ENCODE measurements at regions of chr10 and their contacts with region 1.

Region 1: GRCh38 chr10:76303682-76304316 is 872.4 kb downstream of the LRMDA start:
- DNase-seq: no peak
- ATAC-seq: peak; percentile 95
- H3K4me3 ChIP-seq: no peak overlapping the region
- H3K27ac ChIP-seq: no peak overlapping the region
- H3K4me1 ChIP-seq: no peaks in the 10 kb centered on the region
- H3K27me3 ChIP-seq: no peaks in the 10 kb centered on the region
- CTCF ChIP-seq: peak; percentile 29 to 53 (median 39); a peak in 3 of 6 replicates
- EP300 ChIP-seq: no peak
- POLR2A ChIP-seq: no peak
- RAD21 ChIP-seq: peak; percentile 30; the same call in 1 of the 2 replicates

Region 2: GRCh38 chr10:75530337-75530736 is 773.5 kb before region 1 on chr10:
- CTCF ChIA-PET with region 1: no interaction called
- POLR2A ChIA-PET with region 1: no interaction called
- RAD21 ChIA-PET with region 1: no interaction called
- SMC1A ChIA-PET with region 1: no interaction called
- in situ Hi-C with region 1: no loop called
- intact Hi-C with region 1: loop called (anchors 5 kb)
- DNase-seq: no peak
- ATAC-seq: no peak
- H3K4me3 ChIP-seq: no peak overlapping the region
- H3K27ac ChIP-seq: no peak overlapping the region
- H3K4me1 ChIP-seq: no peaks in the 10 kb centered on the region
- H3K27me3 ChIP-seq: no peaks in the 10 kb centered on the region
- CTCF ChIP-seq: no peak
- EP300 ChIP-seq: no peak
- POLR2A ChIP-seq: no peak
- RAD21 ChIP-seq: no peak

Region 3: DNA sequence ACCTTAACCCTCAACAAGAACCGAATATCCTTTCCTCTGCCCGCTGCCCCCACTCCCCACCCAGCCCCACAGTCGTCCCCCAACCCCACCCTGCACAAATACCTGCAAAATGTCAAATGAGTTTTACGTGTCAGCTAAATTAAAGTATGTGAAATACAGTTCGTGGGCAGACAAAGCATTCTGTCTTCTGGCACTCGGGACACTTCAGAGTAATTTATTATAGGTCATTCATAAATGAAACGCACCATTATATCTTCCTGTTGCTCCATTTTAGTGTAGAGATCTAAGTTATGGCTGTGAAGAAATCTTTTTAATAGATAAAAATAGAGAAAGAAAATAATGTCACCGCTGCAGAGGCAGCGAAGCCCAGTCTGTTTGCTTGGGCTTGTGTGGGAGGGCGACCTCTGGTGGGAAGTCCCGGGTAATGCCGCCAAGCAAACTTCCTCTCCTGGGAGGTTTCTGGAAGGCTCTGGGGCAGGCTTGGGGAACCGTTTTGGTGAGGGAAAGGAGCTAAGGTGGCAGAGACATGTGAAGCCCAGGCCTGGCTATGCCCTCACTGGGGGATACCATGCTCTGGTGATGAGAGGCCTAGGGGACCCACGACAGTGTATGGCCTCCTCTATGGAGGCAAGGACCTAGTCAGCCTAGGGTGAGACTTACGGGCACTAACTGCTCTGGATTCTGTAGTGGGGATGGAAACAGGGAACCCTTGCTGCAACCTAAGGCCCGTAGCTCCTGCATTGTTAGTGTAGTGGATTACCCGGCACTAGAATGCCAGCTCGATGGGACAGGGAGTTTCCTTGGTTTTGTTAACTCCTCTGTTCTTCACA is 267.5 kb before region 1 on chr10:
- CTCF ChIA-PET with region 1: interaction called, 31 read pairs
- POLR2A ChIA-PET with region 1: no interaction called
- RAD21 ChIA-PET with region 1: interaction called, 9 read pairs
- SMC1A ChIA-PET with region 1: interaction called, 17 read pairs
- in situ Hi-C with region 1: no loop called
- intact Hi-C with region 1: no loop called
- DNase-seq: no peak
- ATAC-seq: peak; percentile 90
- H3K4me3 ChIP-seq: no peak overlapping the region
- H3K27ac ChIP-seq: no peak overlapping the region
- H3K4me1 ChIP-seq: no peaks in the 10 kb centered on the region
- H3K27me3 ChIP-seq: no peaks in the 10 kb centered on the region
- CTCF ChIP-seq: peak; percentile 86 to 88 (median 87)
- EP300 ChIP-seq: no peak
- POLR2A ChIP-seq: no peak
- RAD21 ChIP-seq: peak; percentile 66

Region 4: DNA sequence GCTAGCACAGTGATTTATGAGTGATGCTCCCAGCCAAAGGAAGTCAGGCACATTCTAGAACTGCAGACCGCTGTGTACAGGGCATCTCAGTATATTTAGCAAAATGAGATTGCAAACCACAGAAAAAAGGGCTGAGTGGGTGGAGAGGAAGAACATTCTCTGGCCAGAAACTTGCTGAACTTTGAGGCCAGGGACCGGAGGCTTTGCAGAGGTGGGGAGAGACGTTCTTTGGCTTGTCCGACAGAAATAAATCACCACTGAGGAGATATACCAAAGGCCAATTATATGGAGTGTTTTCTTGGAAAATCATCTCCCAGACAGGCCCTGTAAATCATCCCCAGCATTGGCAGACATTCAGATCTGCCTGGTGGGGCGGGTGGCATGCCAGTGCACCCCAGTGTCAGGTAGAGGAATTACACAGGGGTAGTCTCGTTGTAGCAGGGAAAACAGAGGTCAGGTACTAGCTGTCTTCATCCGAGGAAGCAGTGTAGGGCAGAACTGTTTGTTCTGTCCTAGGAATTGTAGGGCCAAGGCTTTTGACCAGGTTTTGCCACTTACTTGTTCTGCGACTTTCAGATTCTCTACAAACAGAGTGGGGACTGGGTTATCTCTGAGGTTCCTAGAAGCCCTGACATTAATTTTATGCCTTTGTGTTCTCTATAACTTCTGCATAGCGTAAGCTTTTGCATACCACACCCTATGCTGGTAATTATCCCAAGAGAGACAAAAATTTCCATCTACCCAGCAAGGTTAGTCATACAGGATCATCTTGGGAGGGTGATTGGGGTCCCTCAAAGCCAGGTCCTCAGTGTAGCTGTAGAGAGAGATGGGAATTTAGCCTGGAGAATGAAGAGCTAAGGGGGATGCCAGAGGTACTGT is 216.8 kb before region 1 on chr10:
- CTCF ChIA-PET with region 1: interaction called, 18 read pairs
- POLR2A ChIA-PET with region 1: no interaction called
- RAD21 ChIA-PET with region 1: interaction called, 15 read pairs
- SMC1A ChIA-PET with region 1: interaction called, 20 read pairs
- in situ Hi-C with region 1: no loop called
- intact Hi-C with region 1: no loop called
- DNase-seq: peak; percentile 4
- ATAC-seq: peak; percentile 92
- H3K4me3 ChIP-seq: no peak overlapping the region
- H3K27ac ChIP-seq: no peak overlapping the region
- H3K4me1 ChIP-seq: no peaks in the 10 kb centered on the region
- H3K27me3 ChIP-seq: no peaks in the 10 kb centered on the region; a peak in 1 of 4 replicates
- CTCF ChIP-seq: peak; percentile 39 to 68 (median 63)
- EP300 ChIP-seq: no peak
- POLR2A ChIP-seq: no peak
- RAD21 ChIP-seq: peak; percentile 17; the same call in 1 of the 2 replicates

Region 5: GRCh38 chr10:76547352-76547972 is 243.7 kb after region 1 on chr10:
- CTCF ChIA-PET with region 1: interaction called, 4 read pairs
- POLR2A ChIA-PET with region 1: no interaction called
- RAD21 ChIA-PET with region 1: interaction called, 3 read pairs
- SMC1A ChIA-PET with region 1: interaction called, 5 read pairs
- in situ Hi-C with region 1: no loop called
- intact Hi-C with region 1: loop called (anchors 10 kb)
- DNase-seq: no peak
- ATAC-seq: peak; percentile 77
- H3K4me3 ChIP-seq: no peak overlapping the region
- H3K27ac ChIP-seq: no peak overlapping the region
- H3K4me1 ChIP-seq: no peaks in the 10 kb centered on the region
- H3K27me3 ChIP-seq: no peaks in the 10 kb centered on the region
- CTCF ChIP-seq: peak; percentile 62 to 65 (median 65)
- EP300 ChIP-seq: no peak
- POLR2A ChIP-seq: no peak
- RAD21 ChIP-seq: peak; percentile 79

Measured in GM12878 (cell line).